Activated CD8-positive, alpha-beta T cell treated with anti-CD3 and anti-CD28 coated beads for 36 hours (primary cell): ENCODE measurements at regions of chr5 and their contacts with region 1.

Region 1: DNA sequence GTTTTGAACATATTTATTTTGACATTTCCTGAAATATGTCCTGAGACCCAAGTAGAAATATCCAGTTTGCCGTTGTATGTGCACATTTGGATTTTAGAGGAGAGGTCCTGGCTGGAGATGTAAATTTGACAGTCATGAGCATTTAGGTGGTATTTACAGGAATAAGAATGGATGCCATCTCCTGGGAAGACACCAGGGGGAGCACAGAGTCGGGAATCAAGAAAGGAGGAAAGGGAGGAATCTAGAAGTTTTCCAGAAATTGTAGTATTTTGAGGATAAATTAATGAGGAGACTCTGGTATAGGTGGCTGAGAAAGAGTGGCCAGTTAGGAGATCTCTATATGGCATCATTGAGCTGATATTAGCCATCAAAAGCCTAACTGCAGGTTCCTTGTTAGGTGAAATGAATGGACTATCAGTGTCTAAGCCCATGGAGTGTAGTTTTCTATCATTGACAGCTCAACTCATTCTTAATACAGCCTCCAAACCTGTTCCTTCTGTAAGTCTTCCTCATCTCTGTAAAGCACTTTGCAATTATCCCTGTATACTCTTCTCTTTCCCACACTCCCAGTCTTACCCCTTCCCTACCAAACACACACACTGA is 7.2 kb downstream of the GAPT start:
- DNase-seq: no peak
- ATAC-seq: no peak
- H3K4me3 Mint-ChIP-seq: no peak overlapping the region
- H3K27ac Mint-ChIP-seq: no peak overlapping the region
- H3K4me1 Mint-ChIP-seq: peaks cover 5% of the 10 kb centered on the region
- H3K27me3 Mint-ChIP-seq: no peaks in the 10 kb centered on the region
- CTCF ChIP-seq: no peak

Region 2: DNA sequence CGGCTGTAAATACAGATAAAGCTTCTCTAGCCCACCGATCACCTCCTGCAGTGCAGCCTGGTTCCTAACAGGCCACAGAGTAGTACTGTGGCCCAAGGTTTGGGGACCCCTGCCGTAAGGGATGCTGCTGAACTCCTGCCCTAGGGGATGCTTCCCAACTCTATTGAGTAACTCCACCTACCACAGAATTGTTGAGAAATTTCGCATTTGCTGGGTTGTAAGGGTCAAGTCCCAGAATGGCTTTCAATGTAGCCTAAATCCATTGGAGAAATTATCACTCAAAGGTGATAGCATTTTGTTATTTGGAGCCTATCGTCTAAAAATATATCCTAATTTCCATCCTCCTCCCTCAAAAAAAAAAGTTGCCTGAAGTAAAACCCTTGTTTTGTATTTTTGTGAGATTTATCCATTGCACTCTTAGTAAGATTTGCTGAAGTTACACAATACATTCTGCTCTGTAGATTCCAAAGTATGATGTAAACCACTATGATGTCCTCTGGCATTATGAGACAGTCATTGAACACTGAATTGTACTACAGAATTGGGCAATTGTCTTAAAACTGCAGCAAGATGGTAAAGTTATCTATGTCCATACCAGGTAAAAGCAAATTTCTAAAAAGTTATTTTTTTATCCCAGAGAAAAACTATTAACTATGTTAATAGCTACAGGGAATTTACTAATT is 1029.8 kb before region 1 on chr5:
- CTCF ChIA-PET with region 1: no interaction called
- POLR2A ChIA-PET with region 1: no interaction called
- intact Hi-C with region 1: no loop called
- DNase-seq: no peak
- ATAC-seq: no peak
- H3K4me3 Mint-ChIP-seq: no peak overlapping the region
- H3K27ac Mint-ChIP-seq: no peak overlapping the region
- H3K4me1 Mint-ChIP-seq: no peaks in the 10 kb centered on the region
- H3K27me3 Mint-ChIP-seq: peaks cover 2% of the 10 kb centered on the region
- CTCF ChIP-seq: no peak

Region 3: DNA sequence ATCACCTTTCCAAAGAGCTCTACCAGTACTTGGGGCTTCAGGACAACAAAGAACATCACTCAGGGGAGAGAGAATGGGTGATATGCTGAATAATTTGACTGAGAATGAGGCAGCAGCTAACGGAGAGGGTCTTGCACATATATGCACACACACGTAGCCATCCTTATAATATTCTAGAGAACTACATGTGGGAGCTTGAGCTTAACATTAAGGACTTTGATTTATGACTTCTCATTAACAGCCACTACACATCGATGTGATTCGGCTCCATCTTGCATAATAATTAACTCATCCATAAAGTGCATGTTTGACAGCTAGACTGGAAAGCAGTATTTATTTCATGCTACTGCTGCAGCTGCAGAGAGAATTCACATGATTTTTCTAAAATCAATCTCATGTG is 247.9 kb after region 1 on chr5:
- CTCF ChIA-PET with region 1: no interaction called
- POLR2A ChIA-PET with region 1: no interaction called
- intact Hi-C with region 1: no loop called
- DNase-seq: no peak
- ATAC-seq: no peak
- H3K4me3 Mint-ChIP-seq: no peak overlapping the region
- H3K27ac Mint-ChIP-seq: no peak overlapping the region
- H3K4me1 Mint-ChIP-seq: no peaks in the 10 kb centered on the region
- H3K27me3 Mint-ChIP-seq: peaks cover 2% of the 10 kb centered on the region
- CTCF ChIP-seq: no peak

Region 4: GRCh38 chr5:58849921-58850667 is 351.7 kb after region 1 on chr5:
- CTCF ChIA-PET with region 1: interaction called, 10 read pairs
- POLR2A ChIA-PET with region 1: no interaction called
- intact Hi-C with region 1: loop called (anchors 10 kb)
- DNase-seq: no peak
- ATAC-seq: peak; percentile 55
- H3K4me3 Mint-ChIP-seq: no peak overlapping the region
- H3K27ac Mint-ChIP-seq: no peak overlapping the region
- H3K4me1 Mint-ChIP-seq: no peaks in the 10 kb centered on the region
- H3K27me3 Mint-ChIP-seq: peaks cover 3% of the 10 kb centered on the region
- CTCF ChIP-seq: peak; percentile 55